ENCODE measurements at regions of chr4 and their contacts with region 1.

Region 1: DNA sequence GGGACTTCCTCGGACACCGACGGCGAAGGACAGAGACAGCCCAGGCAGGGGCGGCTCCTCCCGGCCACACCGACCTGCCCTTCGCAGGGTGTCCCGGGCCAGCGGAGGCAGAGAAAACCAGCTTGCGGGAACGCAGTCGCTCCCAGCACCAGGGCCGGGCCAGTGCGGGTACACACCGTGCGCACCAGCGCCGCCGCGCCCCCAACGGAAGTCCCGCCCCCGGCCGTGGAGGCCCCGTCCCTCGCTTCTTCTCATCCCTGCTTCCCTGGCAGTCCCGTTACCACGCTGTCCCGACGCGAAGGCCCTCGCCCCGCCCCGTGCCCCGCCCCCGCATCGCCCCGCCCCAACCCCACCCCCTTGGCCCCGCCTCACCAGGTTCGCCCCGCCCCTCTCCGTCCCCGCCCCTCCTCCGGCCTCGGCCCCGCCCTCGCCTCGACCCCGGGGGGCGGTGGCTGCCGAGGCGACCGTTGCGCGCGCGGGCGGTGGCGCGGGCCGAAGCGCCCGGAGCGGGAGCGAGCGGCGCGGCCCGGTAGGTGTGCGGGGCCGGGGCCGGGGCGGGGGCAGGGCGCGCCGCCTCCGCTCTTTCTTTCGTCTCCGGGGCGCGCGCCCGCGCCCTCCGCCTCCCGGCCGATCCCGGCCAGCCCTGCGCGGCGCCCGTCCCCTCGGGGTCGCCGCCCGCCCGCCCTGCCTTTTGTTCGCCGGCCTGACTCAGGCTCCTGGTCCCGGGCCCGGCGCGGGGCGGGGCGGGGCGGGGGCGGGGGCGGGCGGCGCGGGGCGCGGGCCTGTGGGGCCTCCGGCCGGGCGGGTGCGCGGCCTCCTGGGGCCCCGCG is at the start of gene RGS12:
- DNase-seq: peak; percentile 86 to 96
- H3K4me3 ChIP-seq: peak within 1 kb of the TSS; percentile 76 to 96
- H3K27ac ChIP-seq: peak within 1 kb of the TSS; percentile 90 to 98
- H3K4me1 ChIP-seq: peaks cover 5 to 11% of the 10 kb centered on the region in 2 donors
- H3K27me3 ChIP-seq: peaks cover 6% of the 10 kb centered on the region
- CTCF ChIP-seq: no peak
- total RNA-seq, gene RGS12: 26.3 TPM

Region 2: GRCh38 chr4:1870578-1871443 is 1422.0 kb before region 1 on chr4 and contains the start of gene NSD2:
- intact Hi-C with region 1: loop called (anchors 5 kb)
- DNase-seq: peak; percentile 35 to 93
- H3K4me3 ChIP-seq: peak within 1 kb of the TSS; percentile 99 to 100
- H3K27ac ChIP-seq: peak within 1 kb of the TSS; percentile 98 to 99
- H3K4me1 ChIP-seq: peaks cover 4 to 5% of the 10 kb centered on the region in 2 donors
- H3K27me3 ChIP-seq: no peaks in the 10 kb centered on the region
- CTCF ChIP-seq: no peak
- total RNA-seq, gene NSD2: 19.9 TPM

Region 3: DNA sequence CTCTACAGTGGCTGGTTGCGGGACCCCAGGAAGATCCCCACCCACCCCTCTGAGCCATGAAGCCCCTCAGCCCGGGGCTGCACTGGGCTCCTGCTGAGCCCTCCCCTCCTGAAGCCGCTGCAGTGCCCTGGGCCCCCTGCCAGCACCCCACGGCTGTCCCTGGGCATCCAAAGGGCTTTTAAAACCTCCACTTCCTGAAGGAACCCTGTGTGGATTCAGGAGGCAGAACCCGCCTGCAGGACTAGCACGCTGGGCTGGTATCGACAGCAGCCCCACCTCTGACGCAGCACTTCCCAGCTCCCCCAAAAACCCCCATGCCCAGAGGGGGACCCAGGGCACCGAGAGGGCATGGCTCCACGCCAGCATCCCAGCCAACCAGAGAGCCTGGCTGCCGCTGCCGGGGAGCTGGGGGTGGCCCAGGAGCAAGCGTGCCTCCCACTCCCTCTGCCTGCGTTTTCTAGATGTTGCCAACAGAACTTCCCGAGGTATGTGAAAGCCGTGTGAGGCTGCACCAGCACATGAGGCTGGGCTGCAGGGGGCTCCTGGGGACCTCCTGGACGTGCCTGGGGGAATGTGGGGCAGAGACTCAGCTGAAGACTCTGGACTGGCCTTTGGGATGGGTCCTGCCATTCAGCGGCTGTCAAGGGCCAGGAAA is 1037.2 kb before region 1 on chr4:
- intact Hi-C with region 1: loop called (anchors 2 kb)
- DNase-seq: peak; percentile 11 to 65
- H3K4me3 ChIP-seq: peak overlapping the region; percentile 26 to 98
- H3K27ac ChIP-seq: peak overlapping the region; percentile 95 to 96
- H3K4me1 ChIP-seq: peaks cover 47 to 67% of the 10 kb centered on the region in 2 donors
- H3K27me3 ChIP-seq: no peaks in the 10 kb centered on the region
- CTCF ChIP-seq: no peak

Region 4: DNA sequence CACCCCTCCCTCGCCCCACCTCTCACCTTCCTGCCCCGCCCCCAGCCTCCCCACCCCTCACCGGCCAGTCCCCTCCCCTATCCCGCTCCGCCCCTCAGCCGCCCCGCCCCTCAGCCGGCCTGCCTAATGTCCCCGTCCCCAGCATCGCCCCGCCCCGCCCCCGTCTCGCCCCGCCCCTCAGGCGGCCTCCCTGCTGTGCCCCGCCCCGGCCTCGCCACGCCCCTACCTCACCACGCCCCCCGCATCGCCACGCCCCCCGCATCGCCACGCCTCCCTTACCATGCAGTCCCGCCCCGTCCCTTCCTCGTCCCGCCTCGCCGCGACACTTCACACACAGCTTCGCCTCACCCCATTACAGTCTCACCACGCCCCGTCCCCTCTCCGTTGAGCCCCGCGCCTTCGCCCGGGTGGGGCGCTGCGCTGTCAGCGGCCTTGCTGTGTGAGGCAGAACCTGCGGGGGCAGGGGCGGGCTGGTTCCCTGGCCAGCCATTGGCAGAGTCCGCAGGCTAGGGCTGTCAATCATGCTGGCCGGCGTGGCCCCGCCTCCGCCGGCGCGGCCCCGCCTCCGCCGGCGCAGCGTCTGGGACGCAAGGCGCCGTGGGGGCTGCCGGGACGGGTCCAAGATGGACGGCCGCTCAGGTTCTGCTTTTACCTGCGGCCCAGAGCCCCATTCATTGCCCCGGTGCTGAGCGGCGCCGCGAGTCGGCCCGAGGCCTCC is 218.5 kb before region 1 on chr4 and contains the starts of genes HTT and HTT-AS:
- intact Hi-C with region 1: loop called (anchors 1 kb)
- DNase-seq: peak; percentile 80 to 97
- H3K4me3 ChIP-seq: peak within 1 kb of the TSS; percentile 95 to 99
- H3K27ac ChIP-seq: peak within 1 kb of the TSS; percentile 86 to 98
- H3K4me1 ChIP-seq: peaks cover 12 to 14% of the 10 kb centered on the region in 2 donors
- H3K27me3 ChIP-seq: no peaks in the 10 kb centered on the region
- CTCF ChIP-seq: no peak
- total RNA-seq, gene HTT: 23.7 TPM
- total RNA-seq, gene HTT-AS: not detected

Region 5: GRCh38 chr4:3091464-3091863 is 201.3 kb before region 1 on chr4:
- intact Hi-C with region 1: no loop called
- DNase-seq: no peak
- H3K4me3 ChIP-seq: no peak overlapping the region
- H3K27ac ChIP-seq: no peak overlapping the region
- H3K4me1 ChIP-seq: no peaks in the 10 kb centered on the region
- H3K27me3 ChIP-seq: no peaks in the 10 kb centered on the region
- CTCF ChIP-seq: no peak

Region 6: GRCh38 chr4:3201718-3202702 is 90.8 kb before region 1 on chr4:
- intact Hi-C with region 1: no loop called
- DNase-seq: no peak
- H3K4me3 ChIP-seq: no peak overlapping the region
- H3K27ac ChIP-seq: no peak overlapping the region
- H3K4me1 ChIP-seq: peaks cover 0 to 3% of the 10 kb centered on the region in 2 donors
- H3K27me3 ChIP-seq: no peaks in the 10 kb centered on the region
- CTCF ChIP-seq: no peak

Region 7: GRCh38 chr4:3248811-3249661 is 43.8 kb before region 1 on chr4 and contains the start of gene MSANTD1:
- intact Hi-C with region 1: no loop called
- DNase-seq: no peak
- H3K4me3 ChIP-seq: no peak within 1 kb of the TSS
- H3K27ac ChIP-seq: no peak within 1 kb of the TSS
- H3K4me1 ChIP-seq: no peaks in the 10 kb centered on the region
- H3K27me3 ChIP-seq: no peaks in the 10 kb centered on the region
- CTCF ChIP-seq: no peak
- total RNA-seq, gene MSANTD1: not detected

Region 8: GRCh38 chr4:4248029-4248884 is 955.5 kb after region 1 on chr4 and contains the start of gene TMEM128:
- intact Hi-C with region 1: loop called (anchors 10 kb)
- DNase-seq: peak; percentile 53 to 97
- H3K4me3 ChIP-seq: peak within 1 kb of the TSS; percentile 69 to 86
- H3K27ac ChIP-seq: peak within 1 kb of the TSS; percentile 89 to 96
- H3K4me1 ChIP-seq: peaks cover 2 to 11% of the 10 kb centered on the region in 2 donors
- H3K27me3 ChIP-seq: no peaks in the 10 kb centered on the region
- CTCF ChIP-seq: peak in 2 of 3 experiments; percentile 15 to 17
- total RNA-seq, gene TMEM128: 0.64 TPM